A673 (cell line): ENCODE measurements at regions of chr21 and their contacts with region 1.

Region 1: DNA sequence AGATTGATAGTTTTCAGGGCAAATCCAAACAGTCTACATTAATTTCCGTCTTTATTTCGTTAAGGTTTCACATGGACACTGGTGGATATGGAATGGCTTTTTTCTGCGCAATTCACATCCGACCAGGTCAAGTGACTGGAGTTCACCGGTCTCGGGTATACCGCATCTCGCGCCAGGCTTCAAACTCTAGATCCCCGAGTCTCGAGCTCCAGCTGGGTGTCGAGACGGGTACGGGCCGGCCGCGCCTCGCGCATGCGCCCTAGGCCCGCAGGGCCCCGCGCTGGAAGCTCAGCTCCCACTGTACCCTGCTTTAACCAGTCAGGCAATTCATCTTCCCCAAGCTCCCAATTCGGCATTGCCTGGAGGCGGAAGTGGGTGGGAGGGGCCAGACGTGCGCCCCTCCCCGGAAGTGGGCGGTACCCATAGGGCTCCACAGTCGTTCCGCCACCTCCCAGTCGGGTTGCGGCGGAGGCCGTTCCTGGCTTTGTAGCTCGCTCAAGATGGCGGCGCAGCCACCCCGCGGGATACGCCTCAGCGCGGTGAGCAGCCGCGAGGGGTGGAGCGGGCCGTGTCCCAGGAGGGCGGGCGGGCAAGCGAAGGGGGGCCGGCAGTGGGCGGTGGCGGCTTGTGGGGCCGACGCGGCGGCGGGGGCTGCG is at the start of gene MORC3:
- DNase-seq: peak; percentile 99
- H3K4me3 ChIP-seq: peak within 1 kb of the TSS; percentile 93
- H3K27ac ChIP-seq: peak within 1 kb of the TSS; percentile 93
- H3K4me1 ChIP-seq: peaks cover 12% of the 10 kb centered on the region
- H3K27me3 ChIP-seq: no peaks in the 10 kb centered on the region
- CTCF ChIP-seq: no peak
- total RNA-seq, gene MORC3: 27.6 and 30.0 TPM in 2 replicates

Region 2: DNA sequence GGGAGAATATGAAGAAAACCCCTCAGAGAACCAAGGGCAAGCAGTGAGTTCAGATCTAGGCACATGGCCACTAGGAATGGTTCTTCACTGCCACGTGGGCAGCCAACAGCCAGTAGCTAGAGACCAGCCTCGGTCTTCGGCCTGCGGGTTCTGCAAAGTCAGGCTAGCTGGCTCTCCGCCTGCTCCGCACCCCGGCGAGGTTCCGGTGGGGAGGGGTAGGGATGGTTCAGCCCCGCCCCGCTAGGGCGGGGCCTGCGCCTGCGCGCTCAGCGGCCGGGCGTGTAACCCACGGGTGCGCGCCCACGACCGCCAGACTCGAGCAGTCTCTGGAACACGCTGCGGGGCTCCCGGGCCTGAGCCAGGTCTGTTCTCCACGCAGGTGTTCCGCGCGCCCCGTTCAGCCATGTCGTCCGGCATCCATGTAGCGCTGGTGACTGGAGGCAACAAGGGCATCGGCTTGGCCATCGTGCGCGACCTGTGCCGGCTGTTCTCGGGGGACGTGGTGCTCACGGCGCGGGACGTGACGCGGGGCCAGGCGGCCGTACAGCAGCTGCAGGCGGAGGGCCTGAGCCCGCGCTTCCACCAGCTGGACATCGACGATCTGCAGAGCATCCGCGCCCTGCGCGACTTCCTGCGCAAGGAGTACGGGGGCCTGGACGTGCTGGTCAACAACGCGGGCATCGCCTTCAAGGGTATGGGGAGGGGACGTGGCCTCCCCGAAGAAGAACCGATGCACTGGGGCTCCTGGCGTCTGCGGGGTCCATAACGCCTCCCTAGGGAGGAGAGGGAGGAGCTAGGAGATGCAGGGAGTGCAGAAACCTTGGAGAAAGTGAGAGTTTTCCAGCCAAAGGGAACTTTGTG is 249.9 kb before region 1 on chr21 and contains the start of gene CBR1:
- CTCF ChIA-PET with region 1: no interaction called
- POLR2A ChIA-PET with region 1: interaction called, 10 read pairs
- intact Hi-C with region 1: no loop called
- DNase-seq: peak; percentile 95
- H3K4me3 ChIP-seq: peak within 1 kb of the TSS; percentile 71
- H3K27ac ChIP-seq: peak within 1 kb of the TSS; percentile 57
- H3K4me1 ChIP-seq: peaks cover 13% of the 10 kb centered on the region
- H3K27me3 ChIP-seq: no peaks in the 10 kb centered on the region
- CTCF ChIP-seq: no peak
- total RNA-seq, gene CBR1: 81.8 and 84.8 TPM in 2 replicates

Region 3: DNA sequence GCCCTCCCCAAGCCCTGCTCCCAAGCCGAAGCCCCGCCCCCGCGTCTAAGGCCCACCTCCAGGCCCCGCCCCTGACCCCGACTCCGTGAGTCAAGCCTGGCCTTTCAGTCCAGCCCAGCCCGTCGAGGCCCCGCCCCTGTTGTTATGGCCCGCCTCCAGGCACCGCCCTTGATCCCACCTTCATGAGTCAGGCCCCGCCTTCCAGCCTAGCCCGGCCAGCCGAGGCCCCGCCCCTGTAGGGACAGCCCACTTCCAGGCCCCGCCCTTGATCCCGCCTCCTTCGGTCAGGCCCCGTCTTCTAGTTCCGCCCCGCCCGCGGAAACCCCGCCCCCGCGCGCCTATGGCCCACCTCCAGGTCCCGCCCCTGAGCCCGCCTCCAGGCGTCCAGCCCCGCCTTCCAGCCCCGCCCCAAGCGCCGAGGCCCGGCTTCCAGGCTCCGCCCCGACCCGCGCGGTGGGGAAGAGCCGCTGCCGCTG is 163.5 kb before region 1 on chr21:
- CTCF ChIA-PET with region 1: interaction called, 7 read pairs
- POLR2A ChIA-PET with region 1: interaction called, 13 read pairs
- intact Hi-C with region 1: loop called (anchors 5 kb)
- DNase-seq: peak; percentile 98
- H3K4me3 ChIP-seq: peak overlapping the region; percentile 97
- H3K27ac ChIP-seq: peak overlapping the region; percentile 79
- H3K4me1 ChIP-seq: peaks cover 4% of the 10 kb centered on the region
- H3K27me3 ChIP-seq: no peaks in the 10 kb centered on the region
- CTCF ChIP-seq: no peak

Region 4: GRCh38 chr21:36235058-36235582 is 84.8 kb before region 1 on chr21:
- CTCF ChIA-PET with region 1: no interaction called
- POLR2A ChIA-PET with region 1: interaction called, 14 read pairs
- intact Hi-C with region 1: no loop called
- DNase-seq: no peak
- H3K4me3 ChIP-seq: no peak overlapping the region
- H3K27ac ChIP-seq: no peak overlapping the region
- H3K4me1 ChIP-seq: no peaks in the 10 kb centered on the region
- H3K27me3 ChIP-seq: no peaks in the 10 kb centered on the region
- CTCF ChIP-seq: no peak

Region 5: GRCh38 chr21:36330904-36331303 is 11.0 kb after region 1 on chr21:
- CTCF ChIA-PET with region 1: interaction called, 15 read pairs
- POLR2A ChIA-PET with region 1: interaction called, 3 read pairs
- intact Hi-C with region 1: no loop called
- DNase-seq: peak; percentile 59
- H3K4me3 ChIP-seq: no peak overlapping the region
- H3K27ac ChIP-seq: no peak overlapping the region
- H3K4me1 ChIP-seq: peaks cover 9% of the 10 kb centered on the region
- H3K27me3 ChIP-seq: no peaks in the 10 kb centered on the region
- CTCF ChIP-seq: peak; percentile 70